ENCODE measurements at regions of chr9 and their contacts with region 1.

Region 1: GRCh38 chr9:127921557-127922120 is 4.8 kb upstream of the ST6GALNAC4 start:
- DNase-seq: no peak
- H3K4me3 ChIP-seq: peak overlapping the region; percentile 14 to 47 (median 24)
- H3K27ac ChIP-seq: no peak overlapping the region
- H3K4me1 ChIP-seq: peaks cover 41 to 53% (median 47%) of the 10 kb centered on the region in 4 donors
- H3K27me3 ChIP-seq: peaks cover 0 to 39% (median 5%) of the 10 kb centered on the region in 4 donors
- CTCF ChIP-seq: peak; percentile 95 to 99 (median 97)
- EP300 ChIP-seq: no peak
- POLR2A ChIP-seq: no peak

Region 2: GRCh38 chr9:127503947-127504782 is 417.5 kb before region 1 on chr9:
- intact Hi-C with region 1: loop called (anchors 10 kb)
- DNase-seq: peak; percentile 94
- H3K4me3 ChIP-seq: no peak overlapping the region
- H3K27ac ChIP-seq: peak overlapping the region in 3 of 4 donors; percentile 27 to 45 (median 31)
- H3K4me1 ChIP-seq: peaks cover 5 to 10% (median 6%) of the 10 kb centered on the region in 4 donors
- H3K27me3 ChIP-seq: no peaks in the 10 kb centered on the region
- CTCF ChIP-seq: peak; percentile 86 to 87 (median 87)
- EP300 ChIP-seq: no peak
- POLR2A ChIP-seq: no peak

Region 3: GRCh38 chr9:127586537-127586936 is 335.1 kb before region 1 on chr9:
- intact Hi-C with region 1: loop called (anchors 2 kb)
- DNase-seq: peak; percentile 93
- H3K4me3 ChIP-seq: no peak overlapping the region
- H3K27ac ChIP-seq: no peak overlapping the region
- H3K4me1 ChIP-seq: peaks cover 0 to 35% (median 26%) of the 10 kb centered on the region in 4 donors
- H3K27me3 ChIP-seq: no peaks in the 10 kb centered on the region
- CTCF ChIP-seq: peak; percentile 87 to 95 (median 93)
- EP300 ChIP-seq: no peak
- POLR2A ChIP-seq: no peak

Region 4: GRCh38 chr9:127785023-127785932 is 136.4 kb before region 1 on chr9:
- intact Hi-C with region 1: loop called (anchors 5 kb)
- DNase-seq: peak; percentile 97
- H3K4me3 ChIP-seq: peak overlapping the region; percentile 73 to 99 (median 87)
- H3K27ac ChIP-seq: peak overlapping the region; percentile 92 to 98 (median 97)
- H3K4me1 ChIP-seq: peaks cover 47 to 58% (median 49%) of the 10 kb centered on the region in 4 donors
- H3K27me3 ChIP-seq: no peaks in the 10 kb centered on the region
- CTCF ChIP-seq: peak; percentile 94 to 99 (median 99)
- EP300 ChIP-seq: no peak
- POLR2A ChIP-seq: no peak

Region 5: GRCh38 chr9:127802576-127803443 is 118.8 kb before region 1 on chr9 and contains the start of gene FPGS:
- intact Hi-C with region 1: loop called (anchors 5 kb)
- DNase-seq: peak; percentile 97
- H3K4me3 ChIP-seq: peak within 1 kb of the TSS; percentile 64 to 85 (median 80)
- H3K27ac ChIP-seq: peak within 1 kb of the TSS; percentile 82 to 98 (median 94)
- H3K4me1 ChIP-seq: peaks cover 20 to 41% (median 36%) of the 10 kb centered on the region in 4 donors
- H3K27me3 ChIP-seq: no peaks in the 10 kb centered on the region
- CTCF ChIP-seq: no peak
- EP300 ChIP-seq: no peak
- POLR2A ChIP-seq: peak; percentile 53
- total RNA-seq, gene FPGS: 36.1 to 56.3 (median 50.1) TPM

Region 6: DNA sequence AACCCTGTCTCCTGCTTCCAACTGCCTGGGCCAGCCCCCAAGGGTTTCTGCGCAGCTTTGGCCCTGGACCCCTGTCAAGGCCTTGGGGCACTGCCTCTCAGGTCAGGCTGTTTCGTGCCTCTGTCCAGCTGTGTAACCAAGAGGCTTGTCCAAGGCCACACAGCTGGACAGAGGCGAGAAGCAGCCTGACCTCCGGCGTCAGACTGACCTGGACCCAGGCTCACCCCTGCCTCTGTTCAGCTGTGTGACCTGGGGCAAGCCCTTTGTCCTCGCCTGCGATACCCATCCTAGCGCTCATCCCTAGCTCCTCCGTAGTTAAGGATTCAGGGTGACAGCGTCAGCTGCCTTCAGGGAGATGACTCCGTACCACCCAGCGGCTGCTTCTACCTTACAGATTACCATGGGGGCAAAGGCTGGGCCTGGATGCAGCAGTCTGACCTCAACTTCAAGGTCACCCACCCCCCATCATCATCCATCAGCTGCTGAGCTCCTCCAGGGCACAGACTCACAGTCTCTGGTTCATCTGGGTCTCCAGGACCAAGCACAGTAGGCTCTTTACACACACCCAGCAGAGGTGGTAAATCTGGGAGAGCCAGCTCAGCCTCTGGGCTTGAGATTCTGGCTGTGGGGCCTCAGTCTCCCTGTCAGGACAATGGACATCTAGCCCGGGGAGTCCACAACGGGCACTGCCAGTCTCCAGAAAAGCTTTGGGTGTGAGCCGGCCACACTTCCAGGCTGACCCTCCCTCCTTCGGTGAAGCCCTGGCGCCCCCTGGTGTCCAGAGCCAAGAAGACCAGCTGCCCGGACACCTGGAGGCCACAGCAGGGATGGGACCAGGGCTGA is 52.1 kb before region 1 on chr9:
- intact Hi-C with region 1: loop called (anchors 2 kb)
- DNase-seq: peak; percentile 96
- H3K4me3 ChIP-seq: no peak overlapping the region
- H3K27ac ChIP-seq: peak overlapping the region in 2 of 4 donors; percentile 30 to 35
- H3K4me1 ChIP-seq: peaks cover 27 to 43% (median 32%) of the 10 kb centered on the region in 4 donors
- H3K27me3 ChIP-seq: no peaks in the 10 kb centered on the region
- CTCF ChIP-seq: peak; percentile 79 to 87 (median 81)
- EP300 ChIP-seq: no peak
- POLR2A ChIP-seq: no peak